CD8-positive, alpha-beta memory T cell (primary cell): ENCODE measurements at regions of chr3 and their contacts with region 1.

Region 1: DNA sequence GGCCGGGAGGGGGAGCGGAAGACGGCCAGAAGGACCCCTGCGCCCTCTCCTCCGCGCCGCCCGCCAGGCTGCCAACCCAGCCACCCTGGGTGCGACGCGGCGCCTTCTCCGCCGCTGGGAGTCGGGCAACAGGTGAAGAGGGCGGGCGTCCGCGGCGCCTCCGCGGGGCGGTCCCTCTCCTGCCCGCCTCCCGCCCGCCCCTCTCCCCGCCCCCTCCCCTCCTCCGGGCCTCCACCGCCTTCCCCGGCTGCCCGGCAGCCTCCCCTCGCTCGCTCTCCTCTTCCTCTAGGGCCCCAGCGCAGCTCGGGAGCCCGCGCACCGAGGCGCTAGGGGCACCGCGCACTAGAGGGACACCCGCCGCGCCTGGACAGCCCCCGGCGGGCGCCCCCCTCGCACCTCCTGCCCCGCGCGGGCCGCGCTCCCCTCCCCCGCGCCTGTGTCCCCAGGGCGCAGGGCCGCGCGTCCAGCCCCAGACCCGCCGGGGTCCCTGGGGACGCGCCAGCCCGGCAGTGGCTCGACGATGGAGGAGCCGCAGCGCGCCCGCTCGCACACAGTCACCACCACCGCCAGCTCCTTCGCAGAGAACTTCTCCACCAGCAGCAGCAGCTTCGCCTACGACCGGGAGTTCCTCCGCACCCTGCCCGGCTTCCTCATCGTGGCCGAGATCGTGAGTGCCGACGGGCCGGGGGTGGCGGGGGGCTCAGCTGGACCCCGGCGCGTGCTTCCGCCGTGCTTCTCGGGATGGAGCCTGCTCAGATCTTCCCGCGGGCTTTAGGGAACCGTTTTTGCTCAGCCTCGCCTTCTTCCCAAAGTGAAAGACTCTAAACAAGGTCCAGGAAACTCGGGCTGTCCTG is at the start of gene CMTM8:
- DNase-seq: peak; percentile 34 to 68 (median 55)
- H3K4me3 ChIP-seq: peak within 1 kb of the TSS; percentile 76
- H3K4me3 Mint-ChIP-seq: peak within 1 kb of the TSS; percentile 82 to 93 (median 87)
- H3K27ac ChIP-seq: no peak within 1 kb of the TSS
- H3K27ac Mint-ChIP-seq: peak within 1 kb of the TSS in 4 of 8 donors; percentile 21 to 79 (median 42)
- H3K4me1 ChIP-seq: peaks cover 15% of the 10 kb centered on the region
- H3K4me1 Mint-ChIP-seq: peaks cover 14 to 28% (median 17%) of the 10 kb centered on the region in 3 donors
- H3K27me3 ChIP-seq: no peaks in the 10 kb centered on the region
- H3K27me3 Mint-ChIP-seq: peaks cover 7 to 9% of the 10 kb centered on the region in 2 donors
- total RNA-seq, gene CMTM8: 3.3 to 4.1 TPM

Region 2: GRCh38 chr3:32226870-32227500 is 11.7 kb before region 1 on chr3:
- CTCF ChIA-PET with region 1: interaction called, 14 read pairs
- POLR2A ChIA-PET with region 1: no interaction called
- DNase-seq: no peak
- H3K4me3 ChIP-seq: no peak overlapping the region
- H3K4me3 Mint-ChIP-seq: no peak overlapping the region
- H3K27ac ChIP-seq: no peak overlapping the region
- H3K27ac Mint-ChIP-seq: no peak overlapping the region
- H3K4me1 ChIP-seq: no peaks in the 10 kb centered on the region
- H3K4me1 Mint-ChIP-seq: no peaks in the 10 kb centered on the region
- H3K27me3 ChIP-seq: no peaks in the 10 kb centered on the region
- H3K27me3 Mint-ChIP-seq: peaks cover 19 to 28% of the 10 kb centered on the region in 2 donors

Region 3: GRCh38 chr3:32255345-32255744 is 16.7 kb after region 1 on chr3:
- CTCF ChIA-PET with region 1: interaction called, 11 read pairs
- POLR2A ChIA-PET with region 1: no interaction called
- DNase-seq: no peak
- H3K4me3 ChIP-seq: no peak overlapping the region
- H3K4me3 Mint-ChIP-seq: no peak overlapping the region
- H3K27ac ChIP-seq: no peak overlapping the region
- H3K27ac Mint-ChIP-seq: no peak overlapping the region
- H3K4me1 ChIP-seq: no peaks in the 10 kb centered on the region
- H3K4me1 Mint-ChIP-seq: peaks cover 3 to 10% (median 9%) of the 10 kb centered on the region in 3 donors
- H3K27me3 ChIP-seq: no peaks in the 10 kb centered on the region
- H3K27me3 Mint-ChIP-seq: peaks cover 7 to 15% of the 10 kb centered on the region in 2 donors

Region 4: DNA sequence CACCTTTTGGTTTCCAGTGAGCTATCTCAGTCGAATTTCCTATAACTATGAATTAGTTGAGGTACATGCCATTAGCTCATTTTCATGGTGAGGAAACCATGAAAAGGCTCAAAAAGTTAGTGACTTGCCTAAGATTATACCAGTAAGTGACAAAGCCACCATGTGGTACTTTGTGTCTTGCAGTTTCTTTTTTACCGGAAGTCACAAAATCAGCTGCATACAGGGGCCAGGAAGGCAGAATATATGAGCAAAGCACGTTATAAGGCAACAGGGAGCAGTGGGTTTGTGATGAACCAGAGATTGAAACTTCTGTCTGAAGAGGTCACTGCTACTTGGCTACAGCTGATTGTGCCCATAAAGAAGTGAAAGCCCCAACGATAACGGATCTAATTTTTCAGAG is 50.1 kb after region 1 on chr3:
- CTCF ChIA-PET with region 1: interaction called, 19 read pairs
- POLR2A ChIA-PET with region 1: no interaction called
- DNase-seq: peak in 2 of 5 donors; percentile 7 to 32
- H3K4me3 ChIP-seq: no peak overlapping the region
- H3K4me3 Mint-ChIP-seq: peak overlapping the region in 6 of 7 donors; percentile 16 to 65 (median 41)
- H3K27ac ChIP-seq: no peak overlapping the region
- H3K27ac Mint-ChIP-seq: peak overlapping the region; percentile 75 to 96 (median 80)
- H3K4me1 ChIP-seq: peaks cover 14% of the 10 kb centered on the region
- H3K4me1 Mint-ChIP-seq: peaks cover 15 to 34% (median 18%) of the 10 kb centered on the region in 3 donors
- H3K27me3 ChIP-seq: no peaks in the 10 kb centered on the region
- H3K27me3 Mint-ChIP-seq: no peaks in the 10 kb centered on the region